ENCODE measurements at regions of chr18 and their contacts with region 1.

Region 1: DNA sequence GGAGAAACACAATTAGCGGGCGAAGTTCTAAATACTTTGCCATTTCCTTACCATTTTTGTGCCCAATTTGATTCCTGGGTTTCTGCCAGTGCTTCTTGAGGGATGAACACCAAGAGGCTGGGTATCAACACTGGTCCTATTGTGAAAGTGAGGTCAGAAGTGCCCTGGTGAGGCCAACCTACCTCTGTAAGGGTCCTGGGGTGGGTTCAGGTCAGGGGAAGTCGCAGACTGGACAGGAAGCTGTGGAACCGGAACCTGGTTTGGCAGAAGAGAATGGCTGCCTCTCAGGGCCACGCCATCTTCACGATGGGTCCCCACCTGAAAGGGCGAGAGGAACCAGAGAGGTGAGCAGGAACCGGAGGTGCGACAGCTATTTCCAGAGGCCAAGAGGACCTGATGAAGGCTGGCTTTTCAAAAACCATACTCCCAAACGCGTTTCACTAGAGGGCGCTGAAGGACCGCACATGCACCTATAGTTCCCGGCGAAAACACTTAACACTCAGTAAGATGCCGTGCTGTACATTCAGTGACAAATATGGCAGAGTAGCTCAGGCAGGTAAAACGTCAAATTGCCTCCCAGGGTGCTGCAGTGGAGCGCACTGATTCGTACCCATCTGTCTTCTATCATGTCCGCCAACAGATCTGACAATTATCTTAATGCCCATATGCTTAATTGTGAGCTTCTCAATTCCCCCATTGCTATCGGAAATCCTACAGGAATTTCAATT is 275.3 kb upstream of the CCDC68 start:
- DNase-seq: peak; percentile 31
- H3K4me3 ChIP-seq: no peak overlapping the region
- CTCF ChIP-seq: peak; percentile 81

Region 2: GRCh38 chr18:55250768-55251173 is 16.2 kb after region 1 on chr18:
- CTCF ChIA-PET with region 1: interaction called, 43 read pairs
- POLR2A ChIA-PET with region 1: no interaction called
- DNase-seq: no peak
- H3K4me3 ChIP-seq: peak overlapping the region; percentile 15; the same call in 1 of the 2 replicates
- CTCF ChIP-seq: no peak

Region 3: DNA sequence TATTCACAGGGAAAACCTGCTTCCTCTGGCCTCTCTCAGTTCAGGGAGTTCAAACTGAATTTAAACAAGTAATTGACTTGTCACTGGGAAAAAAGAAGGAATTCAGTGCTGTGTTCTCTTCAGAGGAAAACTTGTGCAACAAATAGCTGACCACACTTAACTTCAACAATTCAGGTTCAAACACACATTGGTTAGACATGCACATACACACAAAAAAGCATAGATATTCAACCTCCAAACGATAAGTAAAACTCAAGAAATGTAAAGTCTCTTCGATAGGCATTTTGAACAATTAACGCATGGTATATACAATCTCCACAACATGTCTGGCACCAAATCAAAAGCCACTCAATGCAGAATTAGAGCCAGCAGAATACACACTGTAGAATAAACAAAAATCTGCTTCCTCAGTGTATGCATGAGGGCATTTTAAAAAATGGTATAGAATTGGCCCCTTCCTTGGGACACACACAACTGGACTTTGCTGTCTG is 84.5 kb after region 1 on chr18:
- CTCF ChIA-PET with region 1: interaction called, 20 read pairs
- POLR2A ChIA-PET with region 1: no interaction called
- DNase-seq: no peak
- H3K4me3 ChIP-seq: peak overlapping the region; percentile 37
- CTCF ChIP-seq: no peak

Region 4: DNA sequence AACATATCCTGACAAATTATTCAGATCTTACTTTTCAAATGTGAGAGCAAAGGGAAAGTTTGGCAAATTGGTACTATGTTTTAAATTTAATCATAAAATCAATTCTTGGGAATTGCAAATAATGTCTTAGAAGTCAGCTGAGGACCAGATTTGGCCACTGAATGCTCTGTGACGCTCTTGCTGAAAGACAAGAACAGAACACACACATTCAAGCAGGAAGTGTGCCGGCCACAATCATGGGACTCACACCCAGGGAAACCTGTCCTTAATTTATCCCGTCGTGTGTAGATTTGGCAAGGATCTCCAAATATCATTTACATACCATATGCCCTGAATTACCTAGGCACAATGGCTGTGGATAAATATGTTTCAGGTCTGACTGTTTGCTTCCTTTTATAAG is 100.3 kb after region 1 on chr18:
- CTCF ChIA-PET with region 1: interaction called, 39 read pairs
- POLR2A ChIA-PET with region 1: no interaction called
- DNase-seq: no peak
- H3K4me3 ChIP-seq: no peak overlapping the region
- CTCF ChIP-seq: no peak

Region 5: DNA sequence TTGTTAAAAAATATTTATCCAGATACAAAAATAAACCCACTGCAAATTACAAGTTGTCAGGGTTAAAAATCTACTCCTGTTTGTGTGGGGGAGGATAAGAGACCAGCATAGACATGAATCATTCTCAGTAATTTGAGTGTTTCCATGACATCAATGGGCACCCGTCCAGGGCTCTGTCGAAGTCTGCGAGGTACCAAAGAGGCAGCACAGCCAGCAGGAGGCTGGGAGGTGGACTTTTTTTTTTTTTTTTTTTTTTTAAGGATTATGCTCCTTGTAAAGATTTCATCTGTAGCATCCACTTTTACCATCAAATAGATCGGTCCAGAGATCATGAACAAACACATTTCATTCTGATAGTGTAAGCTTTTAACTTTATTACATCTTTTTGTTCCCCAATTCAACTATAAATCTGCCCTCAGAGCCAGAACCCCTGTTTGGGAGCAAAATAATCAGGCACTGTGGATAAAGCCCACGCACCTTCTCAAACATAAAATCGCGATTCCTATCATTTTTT is 171.4 kb after region 1 on chr18:
- CTCF ChIA-PET with region 1: interaction called, 14 read pairs
- POLR2A ChIA-PET with region 1: no interaction called
- DNase-seq: no peak
- H3K4me3 ChIP-seq: no peak overlapping the region
- CTCF ChIP-seq: no peak

Region 6: DNA sequence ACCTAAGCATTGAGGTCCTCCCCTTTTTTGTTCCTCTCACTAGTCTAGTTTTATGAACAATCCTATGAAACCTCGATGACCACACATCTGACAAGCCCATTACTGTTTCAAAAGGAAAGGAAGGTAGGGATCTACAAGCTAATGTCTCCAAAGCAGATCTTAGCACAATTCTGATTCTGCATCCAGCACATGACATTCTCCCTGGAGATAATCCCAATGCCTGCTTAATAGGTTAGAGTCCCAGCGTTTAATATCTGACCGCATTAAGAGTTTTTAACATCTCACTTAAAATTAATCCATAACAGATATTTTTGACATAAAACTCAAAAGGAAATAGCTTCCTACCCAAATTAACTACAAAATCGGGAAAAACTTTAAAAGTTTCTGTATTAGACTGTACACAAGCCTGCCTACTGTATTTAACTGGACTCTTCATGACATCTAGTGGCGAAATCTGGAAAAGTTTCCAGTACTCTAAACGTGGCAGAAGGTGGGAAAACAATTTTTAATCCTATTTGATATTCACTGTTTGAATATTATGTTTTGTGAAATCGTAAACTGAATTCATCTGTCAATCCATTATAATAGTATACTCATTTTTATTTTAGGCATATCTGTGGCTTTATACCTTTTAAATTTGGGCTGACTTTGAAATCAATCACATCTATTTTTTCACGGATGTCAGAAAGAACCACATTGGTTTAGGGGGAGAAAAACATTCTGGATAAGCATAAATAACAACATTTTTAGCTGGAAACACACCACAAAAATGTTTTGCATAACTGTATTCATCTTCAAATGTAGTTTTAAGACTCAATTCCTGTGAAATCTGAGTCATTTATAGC is 1341.5 kb after region 1 on chr18:
- CTCF ChIA-PET with region 1: interaction called, 16 read pairs
- POLR2A ChIA-PET with region 1: no interaction called
- DNase-seq: no peak
- H3K4me3 ChIP-seq: no peak overlapping the region
- CTCF ChIP-seq: peak; percentile 40

Measured in AG04449 (cell line).